ENCODE measurements at regions of chr5 and their contacts with region 1.

Region 1: DNA sequence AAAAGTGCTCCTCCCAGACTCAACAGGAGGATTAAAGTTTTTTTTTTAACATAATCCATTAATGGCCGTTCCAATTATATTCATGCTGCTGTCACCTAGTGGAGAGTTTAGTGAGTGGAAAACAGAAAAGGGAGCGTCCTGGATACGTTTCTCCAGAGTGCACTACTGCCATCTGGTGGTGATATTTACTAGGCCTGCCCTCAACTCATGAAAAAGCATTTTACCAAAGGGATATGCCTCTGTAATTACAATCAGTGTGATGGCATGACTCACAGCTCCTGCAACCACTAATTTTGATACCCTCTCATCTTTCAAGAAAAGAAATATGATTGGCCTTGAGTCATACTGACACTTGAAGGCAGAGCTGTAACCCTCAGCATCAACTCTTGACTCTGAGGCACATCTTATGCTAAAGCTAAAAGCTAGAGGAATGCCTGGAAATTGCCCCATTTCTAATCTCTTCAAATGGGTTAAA is 20.0 kb downstream of the MINAR2 start:
- DNase-seq: peak; percentile 92
- ATAC-seq: peak; percentile 91
- H3K4me3 ChIP-seq: no peak overlapping the region
- H3K27ac ChIP-seq: no peak overlapping the region
- H3K4me1 ChIP-seq: no peaks in the 10 kb centered on the region; a peak in 1 of 4 replicates
- H3K27me3 ChIP-seq: no peaks in the 10 kb centered on the region
- CTCF ChIP-seq: peak; percentile 96 to 99 (median 99)
- POLR2A ChIP-seq: no peak
- RAD21 ChIP-seq: peak; percentile 99

Region 2: GRCh38 chr5:129172580-129172979 is 595.4 kb before region 1 on chr5:
- CTCF ChIA-PET with region 1: interaction called, 11 read pairs
- POLR2A ChIA-PET with region 1: no interaction called
- RAD21 ChIA-PET with region 1: no interaction called
- intact Hi-C with region 1: loop called (anchors 1 kb)
- DNase-seq: peak; percentile 12
- ATAC-seq: 0 out of 2 replicates have a peak, but pooled peaks have one; percentile 42
- H3K4me3 ChIP-seq: no peak overlapping the region
- H3K27ac ChIP-seq: no peak overlapping the region
- H3K4me1 ChIP-seq: no peaks in the 10 kb centered on the region
- H3K27me3 ChIP-seq: no peaks in the 10 kb centered on the region
- CTCF ChIP-seq: peak in 2 of 3 experiments; percentile 37 to 79; a peak in 2 of 6 replicates
- POLR2A ChIP-seq: no peak
- RAD21 ChIP-seq: peak; percentile 67

Region 3: GRCh38 chr5:129541644-129542251 is 226.2 kb before region 1 on chr5:
- CTCF ChIA-PET with region 1: no interaction called
- POLR2A ChIA-PET with region 1: no interaction called
- RAD21 ChIA-PET with region 1: no interaction called
- intact Hi-C with region 1: loop called (anchors 2 kb)
- DNase-seq: peak; percentile 48
- ATAC-seq: peak; percentile 98
- H3K4me3 ChIP-seq: no peak overlapping the region
- H3K27ac ChIP-seq: no peak overlapping the region
- H3K4me1 ChIP-seq: no peaks in the 10 kb centered on the region
- H3K27me3 ChIP-seq: no peaks in the 10 kb centered on the region
- CTCF ChIP-seq: peak; percentile 59 to 95 (median 74)
- POLR2A ChIP-seq: no peak
- RAD21 ChIP-seq: peak; percentile 58

Region 4: GRCh38 chr5:129821477-129822131 is 53.7 kb after region 1 on chr5:
- CTCF ChIA-PET with region 1: no interaction called
- POLR2A ChIA-PET with region 1: no interaction called
- RAD21 ChIA-PET with region 1: no interaction called
- intact Hi-C with region 1: no loop called
- DNase-seq: no peak
- ATAC-seq: no peak
- H3K4me3 ChIP-seq: no peak overlapping the region
- H3K27ac ChIP-seq: no peak overlapping the region
- H3K4me1 ChIP-seq: no peaks in the 10 kb centered on the region
- H3K27me3 ChIP-seq: no peaks in the 10 kb centered on the region
- CTCF ChIP-seq: no peak
- POLR2A ChIP-seq: no peak
- RAD21 ChIP-seq: no peak

Region 5: GRCh38 chr5:130055572-130055971 is 287.6 kb after region 1 on chr5:
- CTCF ChIA-PET with region 1: no interaction called
- POLR2A ChIA-PET with region 1: no interaction called
- RAD21 ChIA-PET with region 1: no interaction called
- intact Hi-C with region 1: no loop called
- DNase-seq: no peak
- ATAC-seq: no peak
- H3K4me3 ChIP-seq: no peak overlapping the region
- H3K27ac ChIP-seq: no peak overlapping the region
- H3K4me1 ChIP-seq: no peaks in the 10 kb centered on the region
- H3K27me3 ChIP-seq: no peaks in the 10 kb centered on the region
- CTCF ChIP-seq: no peak
- POLR2A ChIP-seq: no peak
- RAD21 ChIP-seq: no peak

Region 6: GRCh38 chr5:130141659-130142320 is 373.8 kb after region 1 on chr5:
- CTCF ChIA-PET with region 1: interaction called, 9 read pairs
- POLR2A ChIA-PET with region 1: no interaction called
- RAD21 ChIA-PET with region 1: no interaction called
- intact Hi-C with region 1: loop called (anchors 2 kb)
- DNase-seq: no peak
- ATAC-seq: peak; percentile 80
- H3K4me3 ChIP-seq: no peak overlapping the region
- H3K27ac ChIP-seq: no peak overlapping the region
- H3K4me1 ChIP-seq: no peaks in the 10 kb centered on the region
- H3K27me3 ChIP-seq: no peaks in the 10 kb centered on the region
- CTCF ChIP-seq: peak; percentile 19 to 64 (median 49); a peak in 5 of 6 replicates
- POLR2A ChIP-seq: no peak
- RAD21 ChIP-seq: peak; percentile 62

Region 7: DNA sequence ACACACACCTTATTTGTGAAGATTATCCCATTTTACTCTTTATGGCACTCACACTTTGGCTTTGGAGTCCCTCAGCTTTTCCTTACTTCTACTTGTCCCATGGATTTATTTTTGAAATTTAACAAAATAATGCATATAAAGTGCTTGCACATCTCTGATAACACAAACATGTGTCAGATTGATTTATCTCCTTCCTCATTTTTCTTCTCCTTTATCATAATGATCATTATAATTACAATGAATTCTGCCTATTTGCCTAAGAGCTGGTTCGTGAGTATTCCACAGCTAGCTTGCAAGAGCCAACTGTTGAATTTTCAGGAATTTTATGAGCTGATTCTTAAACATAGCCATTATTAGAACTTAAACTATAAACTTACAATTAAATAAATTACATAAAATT is 484.0 kb after region 1 on chr5:
- CTCF ChIA-PET with region 1: no interaction called
- POLR2A ChIA-PET with region 1: no interaction called
- RAD21 ChIA-PET with region 1: no interaction called
- intact Hi-C with region 1: no loop called
- DNase-seq: no peak
- ATAC-seq: no peak
- H3K4me3 ChIP-seq: no peak overlapping the region
- H3K27ac ChIP-seq: no peak overlapping the region
- H3K4me1 ChIP-seq: no peaks in the 10 kb centered on the region
- H3K27me3 ChIP-seq: no peaks in the 10 kb centered on the region
- CTCF ChIP-seq: no peak
- POLR2A ChIP-seq: no peak
- RAD21 ChIP-seq: no peak

Region 8: GRCh38 chr5:131109540-131110255 is 1341.8 kb after region 1 on chr5:
- CTCF ChIA-PET with region 1: interaction called, 3 read pairs
- POLR2A ChIA-PET with region 1: no interaction called
- RAD21 ChIA-PET with region 1: no interaction called
- intact Hi-C with region 1: loop called (anchors 1 kb)
- DNase-seq: peak; percentile 35
- ATAC-seq: peak; percentile 90
- H3K4me3 ChIP-seq: no peak overlapping the region
- H3K27ac ChIP-seq: no peak overlapping the region
- H3K4me1 ChIP-seq: peaks cover 2% of the 10 kb centered on the region in 2 experiments; a peak in 2 of 4 replicates
- H3K27me3 ChIP-seq: no peaks in the 10 kb centered on the region
- CTCF ChIP-seq: peak; percentile 67 to 83 (median 72)
- POLR2A ChIP-seq: no peak
- RAD21 ChIP-seq: peak; percentile 83